A549 (cell line): ENCODE measurements at regions of chr14 and their contacts with region 1.

Region 1: GRCh38 chr14:22986508-22987054 is 4.2 kb upstream of the AJUBA start:
- DNase-seq: peak; percentile 78 to 88
- ATAC-seq: peak; percentile 51 to 59; a peak in 4 of 6 replicates
- H3K4me3 ChIP-seq: no peak overlapping the region
- H3K27ac ChIP-seq: no peak overlapping the region
- H3K4me1 ChIP-seq: peaks cover 7% of the 10 kb centered on the region; the same call in 1 of the 3 replicates
- CTCF ChIP-seq: peak; percentile 91
- EP300 ChIP-seq: no peak
- POLR2A ChIP-seq: no peak
- RAD21 ChIP-seq: peak; percentile 82 to 93

Region 2: GRCh38 chr14:22929104-22929847 is 57.3 kb before region 1 on chr14 and contains the start of gene PRMT5:
- CTCF ChIA-PET with region 1: interaction called, 30 read pairs
- POLR2A ChIA-PET with region 1: interaction called, 10 read pairs
- DNase-seq: peak; percentile 98 to 99
- ATAC-seq: peak; percentile 95 to 97
- H3K4me3 ChIP-seq: peak within 1 kb of the TSS; percentile 73
- H3K27ac ChIP-seq: peak within 1 kb of the TSS; percentile 82 to 90
- H3K4me1 ChIP-seq: peaks cover 22% of the 10 kb centered on the region
- CTCF ChIP-seq: no peak
- EP300 ChIP-seq: no peak
- POLR2A ChIP-seq: peak; percentile 97
- RAD21 ChIP-seq: no peak
- polyA plus RNA-seq, gene PRMT5: 214 and 299 TPM in 2 replicates

Region 3: GRCh38 chr14:22945642-22946041 is 40.9 kb before region 1 on chr14:
- CTCF ChIA-PET with region 1: interaction called, 13 read pairs
- POLR2A ChIA-PET with region 1: no interaction called
- DNase-seq: no peak
- ATAC-seq: no peak
- H3K4me3 ChIP-seq: no peak overlapping the region
- H3K27ac ChIP-seq: no peak overlapping the region
- H3K4me1 ChIP-seq: no peaks in the 10 kb centered on the region
- CTCF ChIP-seq: no peak
- EP300 ChIP-seq: no peak
- POLR2A ChIP-seq: no peak
- RAD21 ChIP-seq: no peak

Region 4: GRCh38 chr14:22973217-22974032 is 13.2 kb before region 1 on chr14:
- CTCF ChIA-PET with region 1: interaction called, 646 read pairs
- POLR2A ChIA-PET with region 1: interaction called, 33 read pairs
- DNase-seq: peak; percentile 63 to 79
- ATAC-seq: peak; percentile 24 to 45
- H3K4me3 ChIP-seq: no peak overlapping the region
- H3K27ac ChIP-seq: peak overlapping the region; percentile 98 to 100
- H3K4me1 ChIP-seq: peaks cover 63% of the 10 kb centered on the region
- CTCF ChIP-seq: peak; percentile 83
- EP300 ChIP-seq: no peak
- POLR2A ChIP-seq: no peak
- RAD21 ChIP-seq: peak; percentile 86 to 87

Region 5: DNA sequence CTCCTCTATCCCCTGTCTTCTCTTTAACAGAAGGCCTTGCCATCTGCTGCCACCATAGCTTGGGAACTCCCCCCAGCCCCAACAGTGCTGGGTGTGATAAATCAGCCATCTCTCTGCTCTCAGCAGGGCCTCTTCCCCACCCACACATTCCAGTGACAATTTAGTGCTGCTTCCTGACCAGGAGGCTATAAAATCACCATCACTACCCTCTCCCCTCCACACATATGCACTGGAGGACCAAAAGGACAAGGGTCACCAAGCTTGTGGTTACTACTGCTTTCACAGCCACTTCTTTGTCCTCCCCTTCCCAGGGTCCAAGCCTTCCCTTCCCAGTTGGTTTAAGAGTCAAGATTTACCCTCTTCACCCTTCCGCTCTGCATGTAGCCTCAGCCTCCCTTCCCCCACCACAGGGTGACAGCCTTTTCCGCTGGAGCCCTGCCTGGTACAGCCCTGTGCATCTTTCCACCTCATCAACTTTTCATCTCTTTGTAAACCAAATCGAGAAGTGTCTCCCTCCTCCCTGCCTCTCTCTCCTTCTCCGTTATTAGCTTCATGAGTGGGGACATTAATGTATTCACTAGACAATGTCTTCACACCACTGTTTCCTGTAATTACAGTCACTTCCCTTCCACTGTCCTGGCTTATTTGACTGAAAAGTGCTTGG is 38.7 kb after region 1 on chr14:
- CTCF ChIA-PET with region 1: interaction called, 30 read pairs
- POLR2A ChIA-PET with region 1: no interaction called
- DNase-seq: no peak
- ATAC-seq: peak in 1 of 2 experiments; percentile 19; a peak in 1 of 6 replicates
- H3K4me3 ChIP-seq: no peak overlapping the region
- H3K27ac ChIP-seq: no peak overlapping the region
- H3K4me1 ChIP-seq: no peaks in the 10 kb centered on the region
- CTCF ChIP-seq: no peak
- EP300 ChIP-seq: no peak
- POLR2A ChIP-seq: no peak
- RAD21 ChIP-seq: no peak

Region 6: DNA sequence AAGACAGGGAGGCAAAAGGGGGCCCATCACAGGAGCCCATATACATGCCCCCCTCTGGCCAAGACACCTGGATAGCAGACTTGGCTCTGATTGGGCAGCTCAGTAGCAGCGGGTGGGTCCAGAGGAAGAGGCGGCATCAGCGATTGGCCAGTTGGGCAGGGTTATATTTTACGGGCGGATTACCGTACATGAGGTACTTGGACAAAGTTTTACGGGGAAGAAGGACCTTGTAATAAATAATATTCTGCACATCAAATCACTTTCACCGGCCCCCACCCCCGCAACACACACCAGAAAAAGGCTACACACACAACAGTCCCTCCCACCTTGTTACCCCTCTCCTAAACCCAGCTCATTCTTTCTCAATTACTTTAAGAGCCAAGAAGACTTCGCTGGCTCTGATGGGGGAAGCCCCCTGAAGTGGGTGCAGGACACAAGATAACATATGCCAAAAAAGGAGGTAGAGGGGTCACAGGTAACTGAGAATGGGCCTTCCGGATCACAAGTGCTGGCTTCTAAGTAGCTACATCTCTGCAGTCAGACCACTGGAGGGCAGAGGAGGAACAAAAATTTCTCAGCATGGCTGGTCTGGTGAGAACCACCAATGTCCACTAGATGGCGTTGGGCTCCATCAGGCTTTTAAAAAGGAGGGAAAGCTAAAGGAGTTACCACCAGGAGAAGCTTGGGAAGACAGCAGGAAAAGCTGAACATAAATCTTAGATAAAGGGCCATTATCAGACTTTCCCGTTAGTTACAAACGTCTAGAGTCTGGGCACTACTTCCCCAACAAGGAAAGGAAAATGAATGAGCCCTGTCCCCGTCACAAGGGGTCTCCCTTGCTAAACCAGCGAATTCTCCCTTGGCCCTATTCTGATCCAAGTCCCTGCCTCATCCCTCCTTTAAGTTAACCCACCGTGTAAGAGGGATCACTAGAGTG is 82.2 kb after region 1 on chr14:
- CTCF ChIA-PET with region 1: interaction called, 1,206 read pairs
- POLR2A ChIA-PET with region 1: no interaction called
- DNase-seq: peak; percentile 94 to 95
- ATAC-seq: peak; percentile 72 to 86
- H3K4me3 ChIP-seq: no peak overlapping the region
- H3K27ac ChIP-seq: peak overlapping the region in 1 of 2 experiments; percentile 34; a peak in 2 of 6 replicates
- H3K4me1 ChIP-seq: peaks cover 32% of the 10 kb centered on the region
- CTCF ChIP-seq: peak; percentile 99
- EP300 ChIP-seq: no peak
- POLR2A ChIP-seq: no peak
- RAD21 ChIP-seq: peak; percentile 79

Region 7: GRCh38 chr14:23114669-23115491 is 128.3 kb after region 1 on chr14:
- CTCF ChIA-PET with region 1: interaction called, 13 read pairs
- POLR2A ChIA-PET with region 1: no interaction called
- DNase-seq: peak; percentile 79 to 80
- ATAC-seq: peak; percentile 80 to 88
- H3K4me3 ChIP-seq: no peak overlapping the region
- H3K27ac ChIP-seq: peak overlapping the region; percentile 47 to 75; a peak in 5 of 6 replicates
- H3K4me1 ChIP-seq: peaks cover 22% of the 10 kb centered on the region
- CTCF ChIP-seq: no peak
- EP300 ChIP-seq: no peak
- POLR2A ChIP-seq: no peak
- RAD21 ChIP-seq: no peak